Esophagus squamous epithelium (tissue), 5 donors: ENCODE measurements at regions of chr4 and their contacts with region 1.

Region 1: GRCh38 chr4:139651282-139652194 is 14.1 kb upstream of the MGST2 start:
- DNase-seq: no peak
- H3K4me3 ChIP-seq: peak overlapping the region in 1 of 4 donors; percentile 47
- H3K27ac ChIP-seq: no peak overlapping the region
- H3K4me1 ChIP-seq: peaks cover 9 to 33% (median 17%) of the 10 kb centered on the region in 3 donors
- H3K27me3 ChIP-seq: no peaks in the 10 kb centered on the region
- CTCF ChIP-seq: peak; percentile 92 to 94 (median 92)
- POLR2A ChIP-seq: no peak

Region 2: DNA sequence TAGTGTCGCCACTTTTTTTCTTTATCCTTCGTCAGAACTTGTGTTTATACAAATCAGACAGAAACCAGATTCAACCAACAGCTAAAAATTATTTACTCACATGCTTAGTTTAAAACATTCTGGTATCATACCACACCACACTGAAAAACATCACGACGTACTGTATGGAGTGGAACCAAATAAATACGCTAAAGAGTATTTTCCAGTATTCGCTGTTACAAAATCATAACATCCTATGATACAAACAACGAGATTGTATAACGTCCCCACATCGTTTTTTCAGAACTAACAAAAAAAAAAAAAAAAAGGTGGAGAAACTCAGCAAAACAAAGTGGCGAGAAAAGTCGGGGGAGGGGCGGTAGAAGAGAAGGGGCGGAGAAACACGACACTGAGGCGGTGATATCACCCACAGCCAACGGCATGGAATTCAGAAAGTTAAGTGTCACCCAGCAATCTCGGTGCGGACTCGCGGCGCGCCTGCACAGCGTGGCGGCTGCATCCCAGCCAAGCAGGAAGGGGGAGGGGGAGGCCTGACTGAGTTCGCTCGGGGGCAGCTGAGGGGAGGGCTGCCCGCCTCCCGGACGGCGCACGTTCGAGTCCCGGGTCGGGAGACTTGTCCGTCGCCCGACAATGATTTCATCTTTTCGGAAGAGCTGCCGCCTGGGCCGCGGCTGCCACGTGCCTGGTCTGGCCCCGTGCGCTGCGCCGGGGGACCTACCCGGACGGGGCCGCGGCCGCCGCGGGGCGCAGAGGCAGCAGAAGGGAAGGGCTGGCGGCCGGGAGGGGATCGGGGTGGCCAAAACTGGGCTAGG is 96.4 kb before region 1 on chr4:
- intact Hi-C with region 1: no loop called
- DNase-seq: peak; percentile 21
- H3K4me3 ChIP-seq: peak overlapping the region; percentile 63 to 97 (median 82)
- H3K27ac ChIP-seq: peak overlapping the region; percentile 94 to 99 (median 96)
- H3K4me1 ChIP-seq: peaks cover 7 to 83% (median 43%) of the 10 kb centered on the region in 3 donors
- H3K27me3 ChIP-seq: peaks cover 0 to 15% (median 0%) of the 10 kb centered on the region in 4 donors
- CTCF ChIP-seq: no peak
- POLR2A ChIP-seq: peak in 3 of 4 donors; percentile 40 to 86 (median 79)

Region 3: DNA sequence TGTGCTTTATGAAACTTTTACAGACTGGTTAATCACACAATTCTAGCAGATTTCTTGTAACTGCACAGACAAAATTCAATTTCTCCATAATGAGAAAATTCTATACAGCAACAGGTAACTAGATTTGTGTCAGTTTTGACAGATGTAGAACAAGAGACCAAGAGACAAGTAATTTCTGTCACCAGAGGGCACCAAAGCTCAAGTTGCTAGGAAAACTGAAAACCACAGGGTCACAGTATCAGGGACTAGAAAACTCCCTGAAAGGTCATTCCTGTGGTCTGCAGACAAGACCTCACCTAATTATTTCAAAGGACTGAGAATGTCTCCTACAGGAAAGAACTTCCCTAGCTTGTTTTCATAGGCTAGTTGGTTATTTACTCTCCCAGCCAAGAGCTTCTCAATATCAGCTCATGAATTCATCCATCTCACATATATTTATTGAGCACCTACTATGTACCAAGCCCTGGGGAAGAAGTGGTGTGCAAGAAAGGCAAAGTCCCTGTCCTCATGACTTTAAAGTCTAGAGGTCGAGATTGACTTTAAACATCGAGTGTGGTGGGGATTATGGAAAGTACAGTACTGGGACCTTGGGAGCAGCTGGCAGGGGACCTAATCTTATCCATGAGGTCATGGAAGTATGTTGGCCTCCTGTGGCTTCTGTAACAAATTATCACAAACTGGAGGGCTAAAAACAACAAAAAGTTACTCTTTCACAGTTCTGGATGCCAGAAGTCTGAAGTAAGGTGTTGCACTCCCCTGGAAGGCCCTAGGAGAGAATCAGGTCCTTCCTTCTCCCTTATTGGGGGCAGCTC is 47.8 kb before region 1 on chr4:
- intact Hi-C with region 1: loop called (anchors 5 kb)
- DNase-seq: no peak
- H3K4me3 ChIP-seq: no peak overlapping the region
- H3K27ac ChIP-seq: peak overlapping the region in 1 of 4 donors; percentile 89
- H3K4me1 ChIP-seq: peaks cover 3 to 42% (median 25%) of the 10 kb centered on the region in 3 donors
- H3K27me3 ChIP-seq: no peaks in the 10 kb centered on the region
- CTCF ChIP-seq: peak; percentile 26 to 78 (median 64)
- POLR2A ChIP-seq: no peak

Region 4: DNA sequence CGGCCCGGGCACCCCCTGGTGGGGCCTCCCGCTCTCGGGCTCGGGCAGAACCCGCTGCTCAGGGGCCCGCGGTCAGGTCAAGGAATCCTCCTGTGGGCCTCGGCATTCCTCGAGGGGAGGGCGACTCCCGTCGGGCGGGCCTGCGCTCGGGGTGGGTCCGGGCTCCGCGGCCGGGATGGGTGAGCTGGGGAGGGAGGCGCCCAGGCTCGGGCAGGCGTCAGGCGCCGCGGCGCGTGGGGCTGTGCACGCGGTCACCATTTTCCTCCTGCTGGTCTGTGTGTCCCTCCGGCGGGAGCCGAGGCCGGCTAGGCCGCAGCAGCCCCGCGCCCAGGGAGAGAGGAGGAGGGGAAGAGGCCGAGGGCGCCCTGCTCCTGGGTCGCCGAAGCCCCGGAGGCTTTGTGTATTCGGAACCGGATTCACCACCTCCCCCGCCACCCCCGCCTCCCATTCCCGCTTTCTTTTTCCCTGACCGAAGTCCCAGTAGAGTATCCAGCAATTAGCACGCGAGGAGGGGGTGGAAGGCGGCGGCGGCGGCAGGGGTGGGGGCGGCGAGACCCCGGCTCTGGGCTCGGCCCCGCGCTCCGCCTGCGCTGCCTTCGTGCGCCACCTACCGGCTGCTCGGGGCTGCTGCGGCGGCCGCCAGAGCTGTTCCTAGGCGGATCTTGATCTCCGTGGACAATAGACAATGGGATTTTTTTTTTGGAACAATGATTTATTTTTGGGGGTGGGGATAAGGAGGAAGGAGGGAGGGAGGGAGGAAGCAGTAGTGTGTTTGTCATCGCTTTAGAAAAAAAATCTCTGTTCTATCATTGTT is 601.4 kb after region 1 on chr4:
- intact Hi-C with region 1: loop called (anchors 10 kb)
- DNase-seq: no peak
- H3K4me3 ChIP-seq: peak overlapping the region; percentile 61 to 80 (median 76)
- H3K27ac ChIP-seq: peak overlapping the region; percentile 92 to 96 (median 94)
- H3K4me1 ChIP-seq: peaks cover 7 to 54% (median 9%) of the 10 kb centered on the region in 3 donors
- H3K27me3 ChIP-seq: no peaks in the 10 kb centered on the region
- CTCF ChIP-seq: peak; percentile 88 to 98 (median 92)
- POLR2A ChIP-seq: peak in 1 of 4 donors; percentile 27

Region 5: GRCh38 chr4:141220655-141221605 is 1569.4 kb after region 1 on chr4 and contains the start of gene ZNF330:
- intact Hi-C with region 1: loop called (anchors 10 kb)
- DNase-seq: peak; percentile 25
- H3K4me3 ChIP-seq: peak within 1 kb of the TSS; percentile 65 to 94 (median 84)
- H3K27ac ChIP-seq: peak within 1 kb of the TSS; percentile 87 to 97 (median 96)
- H3K4me1 ChIP-seq: peaks cover 13 to 36% (median 14%) of the 10 kb centered on the region in 3 donors
- H3K27me3 ChIP-seq: no peaks in the 10 kb centered on the region
- CTCF ChIP-seq: no peak
- POLR2A ChIP-seq: peak in 3 of 4 donors; percentile 65 to 93 (median 76)
- total RNA-seq, gene ZNF330: 12.3 to 27.5 (median 22.3) TPM